ENCODE measurements at regions of chr3 and their contacts with region 1.

Region 1: DNA sequence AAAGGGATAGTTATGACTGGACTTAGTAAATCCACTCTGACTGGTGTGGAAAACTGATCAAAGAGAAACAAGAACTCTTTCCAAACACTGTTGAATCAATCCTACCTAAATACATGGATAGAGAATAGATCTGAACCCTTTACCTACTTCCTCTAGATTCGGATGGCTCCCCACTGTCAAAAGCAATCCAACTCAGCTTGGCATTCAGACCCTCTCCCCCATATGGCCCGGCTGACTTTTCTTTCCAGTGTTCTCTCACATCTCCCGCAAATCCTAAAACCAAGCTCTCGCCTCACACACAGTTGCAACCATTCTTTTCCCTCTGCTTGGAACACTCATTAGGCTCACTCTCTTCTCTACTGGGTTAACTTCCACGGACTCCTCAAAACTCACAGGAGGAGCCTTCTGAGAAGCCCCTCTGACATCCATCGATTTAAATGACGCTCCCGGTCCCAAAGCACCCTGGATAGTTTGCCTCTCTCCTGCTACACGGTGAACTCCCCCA is 639 bp downstream of the SPICE1 start:
- DNase-seq: no peak
- H3K4me3 ChIP-seq: peak overlapping the region; percentile 99
- H3K4me3 Mint-ChIP-seq: no peak overlapping the region
- H3K27ac ChIP-seq: peak overlapping the region; percentile 90
- H3K27ac Mint-ChIP-seq: no peak overlapping the region
- H3K4me1 ChIP-seq: peaks cover 11% of the 10 kb centered on the region
- H3K4me1 Mint-ChIP-seq: peaks cover 8 to 20% (median 10%) of the 10 kb centered on the region in 3 donors
- H3K27me3 ChIP-seq: no peaks in the 10 kb centered on the region
- H3K27me3 Mint-ChIP-seq: peaks cover 20% of the 10 kb centered on the region in 2 donors

Region 2: GRCh38 chr3:113495035-113495434 is 19.3 kb before region 1 on chr3:
- CTCF ChIA-PET with region 1: interaction called, 31 read pairs
- POLR2A ChIA-PET with region 1: no interaction called
- DNase-seq: peak in 4 of 5 donors; percentile 6 to 64 (median 39)
- H3K4me3 ChIP-seq: no peak overlapping the region
- H3K4me3 Mint-ChIP-seq: no peak overlapping the region
- H3K27ac ChIP-seq: no peak overlapping the region
- H3K27ac Mint-ChIP-seq: peak overlapping the region in 2 of 8 donors; percentile 35 to 40
- H3K4me1 ChIP-seq: no peaks in the 10 kb centered on the region
- H3K4me1 Mint-ChIP-seq: peaks cover 1 to 7% (median 5%) of the 10 kb centered on the region in 3 donors
- H3K27me3 ChIP-seq: no peaks in the 10 kb centered on the region
- H3K27me3 Mint-ChIP-seq: no peaks in the 10 kb centered on the region

Region 3: DNA sequence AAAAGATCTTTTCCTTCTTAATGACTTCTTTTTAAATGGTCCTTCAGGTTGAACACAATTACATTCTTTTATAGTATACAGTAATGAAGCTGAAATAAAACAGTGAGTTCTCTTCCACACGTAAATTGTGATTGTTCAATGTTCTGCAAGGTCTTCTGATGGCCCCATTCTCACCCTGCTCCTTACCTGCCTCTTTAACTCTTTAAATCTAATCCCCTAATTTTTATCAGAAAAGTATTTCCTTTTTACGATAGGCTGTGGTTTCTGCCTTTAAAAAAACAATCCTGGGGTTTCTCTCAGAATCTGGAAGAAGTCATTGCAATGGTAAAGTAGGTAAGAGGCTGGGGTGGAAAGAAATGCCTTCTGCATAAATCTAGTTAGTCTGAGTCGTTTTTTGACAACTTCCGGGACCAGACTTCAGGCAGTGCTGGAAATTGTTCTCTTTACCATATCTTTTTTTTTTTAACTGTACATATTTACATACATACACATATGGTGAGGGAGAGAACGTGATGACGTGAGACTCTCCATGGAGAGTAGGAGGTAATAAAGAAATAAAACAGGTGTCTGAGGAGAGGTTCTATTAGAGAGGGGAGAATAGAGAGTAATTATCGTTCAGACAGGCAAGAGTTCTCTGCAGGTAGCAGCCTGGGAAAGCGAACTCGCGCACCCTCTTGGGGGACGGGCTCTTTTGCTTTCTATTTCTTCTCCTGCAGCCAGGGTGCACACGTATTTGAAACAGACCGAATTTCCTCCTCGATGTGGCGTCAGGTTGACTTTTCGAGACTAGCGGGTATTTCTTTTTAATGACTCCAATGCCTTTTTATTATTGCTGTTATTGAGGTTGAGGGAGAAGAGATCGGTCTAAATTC is 17.7 kb after region 1 on chr3 and contains the start of gene SIDT1:
- CTCF ChIA-PET with region 1: interaction called, 8 read pairs
- POLR2A ChIA-PET with region 1: interaction called, 25 read pairs
- DNase-seq: peak; percentile 52 to 83 (median 76)
- H3K4me3 ChIP-seq: peak within 1 kb of the TSS; percentile 94
- H3K4me3 Mint-ChIP-seq: peak within 1 kb of the TSS; percentile 96 to 100 (median 99)
- H3K27ac ChIP-seq: peak within 1 kb of the TSS; percentile 93
- H3K27ac Mint-ChIP-seq: peak within 1 kb of the TSS; percentile 97 to 100 (median 100)
- H3K4me1 ChIP-seq: peaks cover 42% of the 10 kb centered on the region
- H3K4me1 Mint-ChIP-seq: peaks cover 49 to 53% (median 49%) of the 10 kb centered on the region in 3 donors
- H3K27me3 ChIP-seq: no peaks in the 10 kb centered on the region
- H3K27me3 Mint-ChIP-seq: no peaks in the 10 kb centered on the region
- total RNA-seq, gene SIDT1: 14.8 to 16.6 TPM

Region 4: DNA sequence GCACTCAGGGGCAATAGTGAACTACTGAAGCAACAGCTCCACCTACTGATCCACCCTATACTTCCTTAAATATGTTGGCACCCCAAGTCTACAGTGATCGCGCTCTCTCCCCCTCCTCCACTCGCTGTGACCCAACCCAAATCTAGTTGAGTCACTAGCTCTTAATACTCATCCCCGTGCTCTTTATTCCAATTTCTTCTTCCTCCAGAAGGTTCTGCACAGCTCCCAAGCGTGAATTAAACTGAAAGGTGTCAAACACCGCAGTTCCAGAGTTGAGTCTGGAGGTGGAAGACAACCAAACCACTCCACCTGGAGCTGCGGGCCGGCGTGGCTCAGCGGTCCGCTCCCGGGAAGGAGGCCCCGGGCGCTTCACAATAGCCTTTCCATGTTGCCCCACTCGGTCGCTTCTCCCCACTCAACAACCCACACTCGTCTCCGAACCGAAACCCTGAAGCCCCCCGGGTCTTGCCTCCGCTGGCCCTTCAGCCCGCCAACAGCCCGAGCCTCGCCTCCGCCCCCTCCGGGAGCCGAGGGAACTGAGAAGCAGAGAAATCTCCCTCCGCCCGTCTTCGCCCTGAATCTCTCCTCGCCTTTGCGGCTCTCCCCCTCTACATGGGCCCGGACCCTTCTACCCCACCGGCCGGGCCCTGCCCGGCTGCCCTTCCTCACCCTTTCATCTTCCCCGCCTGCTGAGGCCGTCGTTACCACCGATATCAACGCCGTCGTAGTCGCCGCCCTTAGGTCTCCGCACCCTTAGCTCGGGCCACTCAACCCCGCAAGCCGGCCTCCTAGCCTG is 231.2 kb after region 1 on chr3:
- CTCF ChIA-PET with region 1: interaction called, 17 read pairs
- POLR2A ChIA-PET with region 1: interaction called, 8 read pairs
- DNase-seq: peak; percentile 66 to 87 (median 81)
- H3K4me3 ChIP-seq: peak overlapping the region; percentile 78
- H3K4me3 Mint-ChIP-seq: peak overlapping the region; percentile 92 to 100 (median 98)
- H3K27ac ChIP-seq: peak overlapping the region; percentile 99
- H3K27ac Mint-ChIP-seq: peak overlapping the region; percentile 100
- H3K4me1 ChIP-seq: peaks cover 47% of the 10 kb centered on the region
- H3K4me1 Mint-ChIP-seq: peaks cover 62 to 81% (median 78%) of the 10 kb centered on the region in 3 donors
- H3K27me3 ChIP-seq: no peaks in the 10 kb centered on the region
- H3K27me3 Mint-ChIP-seq: peaks cover 0 to 8% of the 10 kb centered on the region in 2 donors

Region 5: GRCh38 chr3:115147329-115148141 is 1633.2 kb after region 1 on chr3:
- CTCF ChIA-PET with region 1: no interaction called
- POLR2A ChIA-PET with region 1: interaction called, 13 read pairs
- DNase-seq: peak; percentile 94 to 98 (median 97)
- H3K4me3 ChIP-seq: peak overlapping the region; percentile 69
- H3K4me3 Mint-ChIP-seq: peak overlapping the region; percentile 91 to 98 (median 96)
- H3K27ac ChIP-seq: peak overlapping the region; percentile 93
- H3K27ac Mint-ChIP-seq: peak overlapping the region; percentile 92 to 100 (median 99)
- H3K4me1 ChIP-seq: peaks cover 22% of the 10 kb centered on the region
- H3K4me1 Mint-ChIP-seq: peaks cover 25 to 47% (median 32%) of the 10 kb centered on the region in 3 donors
- H3K27me3 ChIP-seq: no peaks in the 10 kb centered on the region
- H3K27me3 Mint-ChIP-seq: no peaks in the 10 kb centered on the region

Measured in CD8-positive, alpha-beta memory T cell (primary cell).